Activated CD4-positive, alpha-beta memory T cell treated with anti-CD3 and anti-CD28 coated beads for 36 hours (primary cell): ENCODE measurements at regions of chr11 and their contacts with region 1.

Region 1: GRCh38 chr11:93784152-93784934 is at the start of gene MED17:
- DNase-seq: peak; percentile 95
- H3K4me3 Mint-ChIP-seq: peak within 1 kb of the TSS; percentile 94
- H3K27ac Mint-ChIP-seq: peak within 1 kb of the TSS; percentile 93
- H3K4me1 Mint-ChIP-seq: peaks cover 43% of the 10 kb centered on the region
- H3K27me3 Mint-ChIP-seq: no peaks in the 10 kb centered on the region
- total RNA-seq, gene MED17: 32.3 to 34.7 TPM

Region 2: GRCh38 chr11:93197380-93198214 is 586.7 kb before region 1 on chr11 and contains the start of gene SLC36A4:
- CTCF ChIA-PET with region 1: no interaction called
- POLR2A ChIA-PET with region 1: interaction called, 6 read pairs
- intact Hi-C with region 1: loop called (anchors 1 kb)
- DNase-seq: peak; percentile 92
- H3K4me3 Mint-ChIP-seq: peak within 1 kb of the TSS; percentile 98
- H3K27ac Mint-ChIP-seq: peak within 1 kb of the TSS; percentile 94
- H3K4me1 Mint-ChIP-seq: peaks cover 23% of the 10 kb centered on the region
- H3K27me3 Mint-ChIP-seq: peaks cover 2% of the 10 kb centered on the region
- total RNA-seq, gene SLC36A4: 13.9 to 14.0 TPM

Region 3: GRCh38 chr11:93234602-93235207 is 549.6 kb before region 1 on chr11:
- CTCF ChIA-PET with region 1: interaction called, 3 read pairs
- POLR2A ChIA-PET with region 1: no interaction called
- intact Hi-C with region 1: loop called (anchors 1 kb)
- DNase-seq: peak; percentile 81
- H3K4me3 Mint-ChIP-seq: no peak overlapping the region
- H3K27ac Mint-ChIP-seq: no peak overlapping the region
- H3K4me1 Mint-ChIP-seq: no peaks in the 10 kb centered on the region
- H3K27me3 Mint-ChIP-seq: peaks cover 18% of the 10 kb centered on the region

Region 4: DNA sequence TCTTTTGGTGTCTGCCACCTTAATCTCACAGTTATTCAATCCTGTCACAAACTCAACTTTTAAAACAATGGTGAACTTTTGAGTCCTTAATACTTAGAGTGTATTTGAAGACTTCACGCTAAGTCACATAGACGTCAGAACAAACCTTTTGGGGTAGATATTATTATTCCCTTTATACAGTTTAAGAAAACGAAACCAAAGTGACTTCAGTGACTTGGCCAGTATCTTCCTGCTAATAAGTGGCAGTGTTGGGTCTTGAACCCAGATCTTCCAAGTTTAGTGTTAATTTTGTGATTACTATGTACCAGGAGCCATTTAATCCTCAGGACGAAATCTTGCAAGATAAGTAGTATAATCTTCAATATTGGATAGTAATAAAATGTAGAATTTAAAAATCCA is 122.2 kb before region 1 on chr11:
- CTCF ChIA-PET with region 1: no interaction called
- POLR2A ChIA-PET with region 1: interaction called, 4 read pairs
- intact Hi-C with region 1: loop called (anchors 1 kb)
- DNase-seq: no peak
- H3K4me3 Mint-ChIP-seq: peak overlapping the region; percentile 94
- H3K27ac Mint-ChIP-seq: peak overlapping the region; percentile 95
- H3K4me1 Mint-ChIP-seq: peaks cover 43% of the 10 kb centered on the region
- H3K27me3 Mint-ChIP-seq: no peaks in the 10 kb centered on the region

Region 5: DNA sequence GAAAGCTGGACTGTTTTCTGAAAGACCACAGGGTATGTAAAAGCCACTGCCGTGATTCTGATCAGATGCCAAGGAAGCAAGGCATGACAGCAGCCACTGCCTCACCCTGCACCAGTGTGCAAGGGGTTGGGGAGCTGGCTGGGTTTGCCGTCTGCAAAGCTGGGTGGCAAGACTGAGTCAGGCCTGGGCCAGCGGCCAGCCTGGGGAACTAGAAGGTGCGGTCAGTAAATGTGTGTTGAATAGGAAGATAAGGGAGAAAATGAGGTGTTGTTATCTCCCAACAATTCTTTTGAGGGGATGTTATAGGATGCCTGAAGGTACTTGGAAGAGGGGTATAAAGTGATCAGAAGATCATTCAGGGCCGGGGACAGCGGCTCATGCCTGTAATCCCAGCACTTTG is 58.1 kb after region 1 on chr11:
- CTCF ChIA-PET with region 1: no interaction called
- POLR2A ChIA-PET with region 1: no interaction called
- intact Hi-C with region 1: no loop called
- DNase-seq: no peak
- H3K4me3 Mint-ChIP-seq: no peak overlapping the region
- H3K27ac Mint-ChIP-seq: no peak overlapping the region
- H3K4me1 Mint-ChIP-seq: no peaks in the 10 kb centered on the region
- H3K27me3 Mint-ChIP-seq: no peaks in the 10 kb centered on the region

Region 6: DNA sequence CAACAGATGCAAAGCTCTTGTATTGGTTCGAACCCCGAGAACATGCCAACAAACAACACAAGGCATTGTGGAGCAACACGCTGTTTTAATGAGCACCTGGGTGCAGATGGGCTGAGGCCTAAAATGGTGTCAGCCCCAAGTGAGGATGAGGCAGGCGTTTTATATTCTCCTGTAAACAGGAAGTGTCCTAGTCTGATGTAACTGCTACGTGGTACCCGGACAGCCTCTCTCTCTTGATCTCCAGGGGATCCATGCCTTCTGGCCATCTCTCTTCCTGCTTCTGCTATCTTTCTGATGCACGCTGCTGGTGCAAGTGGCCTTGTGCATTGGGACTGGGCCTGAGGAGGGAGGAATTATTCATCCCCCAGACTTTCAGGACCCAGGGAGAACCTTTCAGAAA is 85.5 kb after region 1 on chr11:
- CTCF ChIA-PET with region 1: no interaction called
- POLR2A ChIA-PET with region 1: no interaction called
- intact Hi-C with region 1: no loop called
- DNase-seq: no peak
- H3K4me3 Mint-ChIP-seq: no peak overlapping the region
- H3K27ac Mint-ChIP-seq: no peak overlapping the region
- H3K4me1 Mint-ChIP-seq: no peaks in the 10 kb centered on the region
- H3K27me3 Mint-ChIP-seq: no peaks in the 10 kb centered on the region

Region 7: DNA sequence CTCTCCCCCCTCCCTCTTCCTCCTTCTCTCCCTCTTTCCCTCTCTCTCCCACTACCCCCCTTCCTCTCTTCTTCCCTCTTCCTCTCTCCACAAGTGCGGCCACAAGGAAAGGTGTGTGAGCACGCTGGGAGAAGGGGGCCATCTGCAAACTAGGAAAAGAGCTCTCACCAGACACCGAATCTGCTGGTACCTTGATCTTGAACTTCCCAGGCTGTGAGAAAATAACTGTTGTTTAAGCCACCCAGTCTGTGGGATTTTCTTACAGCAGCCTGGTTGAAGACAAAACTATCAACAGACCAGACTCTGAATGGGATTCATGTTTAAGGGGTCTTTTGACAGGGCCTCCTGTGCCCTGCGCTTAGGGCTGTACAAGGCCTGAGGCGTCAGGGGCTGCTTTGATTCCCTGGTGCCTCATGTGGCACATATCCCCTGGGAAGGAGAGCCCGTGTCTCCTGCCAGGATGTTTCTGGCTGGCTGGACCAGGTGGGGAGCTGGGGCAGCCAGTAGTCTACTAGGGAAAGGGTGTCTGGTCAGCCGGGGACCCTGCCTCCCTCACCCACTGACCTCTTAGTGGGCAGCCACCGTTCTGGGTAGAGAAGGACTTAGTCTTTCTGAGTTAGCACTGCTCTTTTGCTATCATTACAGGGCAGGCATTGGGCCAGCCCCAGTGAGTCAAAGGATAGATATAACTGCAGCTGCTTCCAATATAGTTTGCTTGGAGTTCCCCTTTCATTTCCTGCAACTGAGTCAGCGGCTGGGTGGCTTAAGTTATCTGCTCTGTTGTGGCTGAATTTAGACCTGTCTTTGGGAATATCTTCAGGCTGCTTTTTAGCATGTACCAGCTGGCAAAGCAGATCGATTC is 350.5 kb after region 1 on chr11:
- CTCF ChIA-PET with region 1: no interaction called
- POLR2A ChIA-PET with region 1: no interaction called
- intact Hi-C with region 1: loop called (anchors 5 kb)
- DNase-seq: peak; percentile 74
- H3K4me3 Mint-ChIP-seq: no peak overlapping the region
- H3K27ac Mint-ChIP-seq: peak overlapping the region; percentile 47
- H3K4me1 Mint-ChIP-seq: peaks cover 42% of the 10 kb centered on the region
- H3K27me3 Mint-ChIP-seq: no peaks in the 10 kb centered on the region